Activated CD4-positive, alpha-beta memory T cell treated with anti-CD3 and anti-CD28 coated beads for 36 hours (primary cell): ENCODE measurements at regions of chr17 and their contacts with region 1.

Region 1: DNA sequence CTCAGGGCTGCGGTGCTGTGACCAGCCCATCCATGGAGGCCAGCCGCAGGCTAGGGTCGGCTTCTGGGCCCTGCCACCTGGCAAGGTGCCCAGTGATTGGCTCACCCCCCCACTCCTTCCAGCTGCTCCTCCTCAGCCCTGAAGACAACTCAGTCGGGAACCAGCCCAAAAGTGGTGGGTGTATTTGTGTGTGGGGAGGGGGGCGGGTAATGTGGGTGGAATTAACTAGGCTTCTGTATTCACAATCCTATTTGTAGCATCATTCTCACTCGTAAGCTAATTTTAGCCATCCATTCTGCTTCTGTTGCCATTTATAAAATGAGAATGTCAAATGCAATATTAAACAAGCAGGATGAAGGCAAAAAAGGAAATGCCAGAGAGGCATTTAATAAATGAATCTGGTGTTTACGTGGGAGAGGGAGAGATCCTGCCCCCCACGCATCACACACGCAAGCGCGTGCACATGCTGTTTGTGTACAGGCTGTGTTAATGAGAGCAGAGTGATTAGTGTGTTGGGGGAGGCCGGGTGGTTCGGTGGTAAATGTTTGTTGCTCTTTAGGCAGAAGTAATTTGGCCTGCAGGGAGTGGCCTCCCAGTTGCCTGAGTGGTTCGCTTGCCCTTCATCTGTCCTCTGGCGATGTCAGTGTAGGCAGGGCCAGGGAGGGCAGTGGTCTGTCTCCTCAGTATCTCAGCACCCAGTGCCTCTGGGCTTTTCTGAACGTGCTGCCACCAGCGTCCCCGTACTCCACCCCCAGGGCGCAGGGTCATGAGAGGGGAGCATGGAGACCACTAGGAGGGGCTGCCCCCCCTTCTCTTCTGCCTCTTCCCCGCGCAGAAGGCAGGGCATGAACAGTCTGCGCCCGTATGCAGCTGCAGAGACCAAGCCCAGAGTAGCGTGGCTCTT is 140.1 kb downstream of the CCDC182 start:
- DNase-seq: peak; percentile 54
- H3K4me3 Mint-ChIP-seq: peak overlapping the region; percentile 34
- H3K27ac Mint-ChIP-seq: peak overlapping the region; percentile 95
- H3K4me1 Mint-ChIP-seq: peaks cover 82% of the 10 kb centered on the region
- H3K27me3 Mint-ChIP-seq: no peaks in the 10 kb centered on the region

Region 2: GRCh38 chr17:57255776-57256681 is 349.0 kb before region 1 on chr17 and contains the start of gene MSI2:
- CTCF ChIA-PET with region 1: no interaction called
- POLR2A ChIA-PET with region 1: interaction called, 3 read pairs
- intact Hi-C with region 1: loop called (anchors 5 kb)
- DNase-seq: peak; percentile 90
- H3K4me3 Mint-ChIP-seq: peak within 1 kb of the TSS; percentile 85
- H3K27ac Mint-ChIP-seq: peak within 1 kb of the TSS; percentile 85
- H3K4me1 Mint-ChIP-seq: peaks cover 41% of the 10 kb centered on the region
- H3K27me3 Mint-ChIP-seq: no peaks in the 10 kb centered on the region
- total RNA-seq, gene MSI2: 65.7 to 71.9 TPM

Region 3: DNA sequence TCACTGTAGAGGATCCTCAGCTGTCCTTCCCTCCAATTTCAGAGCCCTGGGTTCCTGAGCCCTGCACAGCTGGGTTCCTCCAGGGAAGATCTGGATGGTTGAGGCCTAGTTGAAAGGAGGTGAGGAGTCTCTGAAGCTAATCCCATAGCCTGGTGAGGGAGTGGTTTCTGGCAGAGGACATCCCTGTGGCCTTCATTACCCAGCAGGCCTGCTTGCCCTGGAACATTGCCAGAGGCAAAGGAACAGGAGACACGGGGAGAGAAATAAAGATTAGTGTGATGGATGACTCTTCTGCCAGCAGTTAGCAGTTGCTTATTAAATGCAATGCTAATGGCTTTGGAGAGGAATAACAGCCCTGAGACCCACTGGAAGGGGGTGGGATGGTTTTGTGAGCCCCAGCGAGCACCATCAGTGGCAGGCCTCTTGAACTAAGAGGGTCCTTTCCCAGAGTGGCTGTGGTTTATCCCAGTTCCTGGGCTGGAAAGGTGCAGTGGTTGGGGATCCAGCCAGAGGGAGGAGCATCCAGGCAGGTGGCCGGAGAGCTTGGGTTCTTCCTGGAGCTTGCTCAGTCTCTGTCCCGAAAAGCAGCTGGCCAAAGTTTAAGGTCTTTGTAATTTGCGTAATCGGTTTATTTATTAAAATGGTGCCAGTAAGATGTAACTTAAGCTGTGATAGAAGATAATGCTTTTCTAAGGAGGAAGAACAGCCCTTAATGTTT is 69.6 kb before region 1 on chr17:
- CTCF ChIA-PET with region 1: no interaction called
- POLR2A ChIA-PET with region 1: no interaction called
- intact Hi-C with region 1: loop called (anchors 5 kb)
- DNase-seq: no peak
- H3K4me3 Mint-ChIP-seq: no peak overlapping the region
- H3K27ac Mint-ChIP-seq: no peak overlapping the region
- H3K4me1 Mint-ChIP-seq: peaks cover 18% of the 10 kb centered on the region
- H3K27me3 Mint-ChIP-seq: no peaks in the 10 kb centered on the region

Region 4: DNA sequence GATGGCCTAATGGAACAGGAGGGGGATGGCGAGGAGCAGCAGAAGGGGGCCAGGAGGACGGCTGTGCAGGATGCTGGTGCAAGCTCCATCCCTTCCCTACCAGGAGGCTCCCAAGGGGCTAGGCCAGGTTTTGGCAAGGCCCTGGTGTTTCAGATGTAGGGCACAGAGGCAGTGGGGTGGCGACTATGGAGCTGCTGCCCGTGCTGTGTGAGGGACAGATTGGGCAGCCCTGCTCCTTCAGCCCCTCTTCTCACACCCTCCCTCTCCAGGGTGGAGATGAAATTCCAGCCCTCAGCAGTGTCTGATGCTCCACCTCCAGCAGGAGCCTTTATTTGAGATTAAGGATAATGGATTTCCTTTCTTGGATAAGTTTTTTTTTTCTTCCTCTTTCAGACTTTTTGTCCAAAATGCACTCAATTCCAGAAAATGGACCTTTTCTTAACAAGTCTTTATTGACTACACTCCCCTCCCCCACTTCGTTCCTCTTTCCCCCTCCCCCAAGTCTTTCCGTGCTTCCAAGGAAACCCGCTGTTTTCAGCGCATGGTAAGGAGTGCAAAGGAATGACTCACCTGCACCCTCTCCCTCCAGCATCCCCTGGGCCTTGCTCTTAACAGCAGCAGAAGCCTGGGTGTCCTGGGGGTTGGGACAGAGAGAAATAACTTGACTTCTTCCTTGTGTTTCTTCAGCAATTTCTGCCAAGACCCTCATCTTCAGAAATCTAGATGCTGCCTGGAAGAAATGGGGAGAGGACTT is 44.9 kb after region 1 on chr17:
- CTCF ChIA-PET with region 1: no interaction called
- POLR2A ChIA-PET with region 1: interaction called, 3 read pairs
- intact Hi-C with region 1: loop called (anchors 1 kb)
- DNase-seq: no peak
- H3K4me3 Mint-ChIP-seq: no peak overlapping the region
- H3K27ac Mint-ChIP-seq: no peak overlapping the region
- H3K4me1 Mint-ChIP-seq: peaks cover 9% of the 10 kb centered on the region
- H3K27me3 Mint-ChIP-seq: no peaks in the 10 kb centered on the region